ENCODE measurements at regions of chr1 and their contacts with region 1.

Region 1: DNA sequence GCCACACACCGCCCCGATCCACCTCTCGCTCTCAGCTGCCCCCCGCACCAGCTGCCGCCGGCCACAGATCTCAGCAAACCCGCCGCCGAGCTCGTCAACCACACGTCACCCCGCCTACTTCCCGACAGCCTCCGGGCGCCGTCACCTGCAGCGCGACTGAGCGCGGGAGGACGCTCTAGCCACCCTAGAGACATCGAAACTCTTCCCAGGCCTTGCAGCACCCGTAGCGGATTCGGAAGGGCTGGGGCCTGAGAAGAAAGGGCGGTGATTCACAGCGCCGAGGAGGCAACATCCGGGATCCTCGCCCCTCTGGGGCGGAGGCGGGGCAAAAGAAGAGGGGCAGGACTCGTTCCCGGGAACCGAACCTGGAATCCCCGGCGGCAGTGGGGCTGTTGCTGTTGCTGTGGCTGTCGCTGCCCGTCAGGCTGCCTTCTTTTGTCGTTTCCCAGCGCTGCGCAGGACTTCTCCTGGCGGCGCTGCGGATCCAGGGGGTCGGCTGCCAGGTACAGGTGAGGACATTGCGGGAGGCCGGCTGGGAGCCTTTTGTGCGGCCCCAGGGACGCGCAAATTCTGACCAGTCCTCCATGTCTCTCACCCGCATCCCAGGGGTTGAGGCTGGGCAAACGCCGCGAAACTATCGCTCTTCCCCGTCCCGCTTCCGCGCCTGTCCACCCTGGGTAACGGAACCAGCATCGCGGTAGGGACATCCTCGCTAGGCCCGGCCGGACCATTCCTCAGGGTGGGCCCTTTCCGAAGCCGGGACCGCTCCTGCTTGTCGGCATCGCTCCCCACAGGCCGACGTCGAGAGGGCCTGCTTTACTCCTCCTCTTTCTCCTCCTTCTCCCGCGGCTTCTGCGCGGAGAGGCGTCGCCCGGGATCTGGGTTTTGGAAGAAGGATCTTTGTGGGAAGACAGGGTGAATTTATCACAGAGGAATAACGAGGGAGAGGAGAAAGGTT is at the starts of genes RO60 and UCHL5:
- DNase-seq: peak; percentile 95
- ATAC-seq: peak; percentile 95
- H3K4me3 Mint-ChIP-seq: peak within 1 kb of the TSS; percentile 100
- H3K27ac Mint-ChIP-seq: peak within 1 kb of the TSS; percentile 100
- H3K4me1 Mint-ChIP-seq: peaks cover 37% of the 10 kb centered on the region
- H3K27me3 Mint-ChIP-seq: no peaks in the 10 kb centered on the region
- CTCF ChIP-seq: no peak
- total RNA-seq, gene RO60: 79.9 to 86.4 TPM (median 84.7 TPM) in 3 replicates
- total RNA-seq, gene UCHL5: 31.6 to 41.5 TPM (median 32.8 TPM) in 3 replicates

Region 2: GRCh38 chr1:193069748-193070385 is 10.3 kb after region 1 on chr1:
- CTCF ChIA-PET with region 1: interaction called, 11 read pairs
- POLR2A ChIA-PET with region 1: interaction called, 10 read pairs
- DNase-seq: peak; percentile 21
- ATAC-seq: peak; percentile 81
- H3K4me3 Mint-ChIP-seq: no peak overlapping the region
- H3K27ac Mint-ChIP-seq: no peak overlapping the region
- H3K4me1 Mint-ChIP-seq: peaks cover 11% of the 10 kb centered on the region
- H3K27me3 Mint-ChIP-seq: no peaks in the 10 kb centered on the region
- CTCF ChIP-seq: peak; percentile 17; the same call in 1 of the 2 replicates

Region 3: GRCh38 chr1:193104906-193105820 is 45.6 kb after region 1 on chr1 and contains the start of gene GLRX2:
- CTCF ChIA-PET with region 1: no interaction called
- POLR2A ChIA-PET with region 1: interaction called, 15 read pairs
- DNase-seq: peak; percentile 86
- ATAC-seq: peak; percentile 93
- H3K4me3 Mint-ChIP-seq: peak within 1 kb of the TSS; percentile 82
- H3K27ac Mint-ChIP-seq: peak within 1 kb of the TSS; percentile 89
- H3K4me1 Mint-ChIP-seq: peaks cover 15% of the 10 kb centered on the region
- H3K27me3 Mint-ChIP-seq: peaks cover 17% of the 10 kb centered on the region
- CTCF ChIP-seq: no peak
- total RNA-seq, gene GLRX2: 8.4 to 9.9 TPM (median 8.6 TPM) in 3 replicates

Measured in WTC11 (cell line).